Heart right ventricle (tissue), 16 donors: ENCODE measurements at regions of chr19 and their contacts with region 1.

Region 1: DNA sequence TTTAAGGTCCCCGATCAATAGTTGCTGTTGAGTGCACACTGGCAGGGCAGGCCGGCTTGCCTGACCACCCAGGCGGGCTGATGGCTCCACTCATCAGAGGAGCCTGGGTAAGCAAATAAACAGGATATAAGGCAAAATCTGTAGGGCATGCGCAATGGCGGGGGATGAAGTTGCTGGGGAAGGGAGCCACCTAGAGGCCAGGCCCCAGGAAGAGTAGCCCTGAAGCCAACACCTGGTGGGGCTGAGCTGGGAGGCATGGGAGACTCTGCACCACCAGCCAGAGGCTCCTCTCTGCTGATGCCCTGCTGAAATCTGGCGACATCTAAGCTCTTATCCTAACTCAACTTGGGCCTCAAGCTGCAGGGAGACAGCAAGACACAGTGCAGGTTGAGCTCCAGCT is 324.3 kb downstream of the ZNF536 start:
- DNase-seq: no peak
- ATAC-seq: peak in 1 of 8 donors; percentile 45
- H3K4me3 ChIP-seq: no peak overlapping the region
- H3K27ac ChIP-seq: no peak overlapping the region
- H3K4me1 ChIP-seq: peaks cover 0 to 16% (median 0%) of the 10 kb centered on the region in 9 donors
- H3K27me3 ChIP-seq: peaks cover 0 to 25% (median 11%) of the 10 kb centered on the region in 7 donors
- CTCF ChIP-seq: peak in 7 of 9 donors; percentile 29 to 57 (median 42)

Region 2: GRCh38 chr19:30731591-30731990 is 35.1 kb after region 1 on chr19:
- intact Hi-C with region 1: no loop called
- DNase-seq: peak; percentile 16 to 20
- ATAC-seq: peak in 2 of 8 donors; percentile 37 to 58
- H3K4me3 ChIP-seq: no peak overlapping the region
- H3K27ac ChIP-seq: no peak overlapping the region
- H3K4me1 ChIP-seq: no peaks in the 10 kb centered on the region
- H3K27me3 ChIP-seq: peaks cover 0 to 6% (median 3%) of the 10 kb centered on the region in 7 donors
- CTCF ChIP-seq: no peak

Region 3: GRCh38 chr19:30804333-30805103 is 108.0 kb after region 1 on chr19:
- intact Hi-C with region 1: no loop called
- DNase-seq: no peak
- ATAC-seq: no peak
- H3K4me3 ChIP-seq: no peak overlapping the region
- H3K27ac ChIP-seq: no peak overlapping the region
- H3K4me1 ChIP-seq: peaks cover 0 to 6% (median 0%) of the 10 kb centered on the region in 9 donors
- H3K27me3 ChIP-seq: peaks cover 5 to 55% (median 30%) of the 10 kb centered on the region in 7 donors
- CTCF ChIP-seq: no peak

Region 4: DNA sequence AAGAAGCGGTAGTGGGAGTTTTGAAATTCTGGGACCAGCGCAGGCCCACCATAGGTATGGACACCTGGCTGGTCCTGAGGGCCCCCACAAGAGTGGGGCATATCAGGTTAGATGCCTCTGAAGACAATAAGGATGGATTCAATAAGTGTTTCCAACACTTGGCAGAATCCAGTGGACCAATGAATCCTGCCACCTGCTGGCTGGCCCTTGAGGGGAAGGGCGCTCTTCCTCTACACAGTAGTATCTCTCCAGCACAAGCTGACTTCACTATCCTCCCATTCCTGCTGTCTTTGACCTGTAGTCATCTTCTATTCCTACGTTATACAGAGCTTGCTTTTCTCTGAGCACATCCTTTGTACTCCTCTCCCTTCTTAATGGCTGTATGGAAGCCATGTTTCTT is 852.4 kb after region 1 on chr19:
- intact Hi-C with region 1: loop called in 1 of 10 experiments (anchors 10 kb)
- DNase-seq: peak in 1 of 2 donors; percentile 37
- ATAC-seq: peak in 1 of 8 donors; percentile 52
- H3K4me3 ChIP-seq: no peak overlapping the region
- H3K27ac ChIP-seq: no peak overlapping the region
- H3K4me1 ChIP-seq: no peaks in the 10 kb centered on the region
- H3K27me3 ChIP-seq: peaks cover 0 to 19% (median 0%) of the 10 kb centered on the region in 7 donors
- CTCF ChIP-seq: peak; percentile 20 to 63 (median 51)